Transverse colon (tissue), 4 donors: ENCODE measurements at regions of chr1 and their contacts with region 1.

Region 1: DNA sequence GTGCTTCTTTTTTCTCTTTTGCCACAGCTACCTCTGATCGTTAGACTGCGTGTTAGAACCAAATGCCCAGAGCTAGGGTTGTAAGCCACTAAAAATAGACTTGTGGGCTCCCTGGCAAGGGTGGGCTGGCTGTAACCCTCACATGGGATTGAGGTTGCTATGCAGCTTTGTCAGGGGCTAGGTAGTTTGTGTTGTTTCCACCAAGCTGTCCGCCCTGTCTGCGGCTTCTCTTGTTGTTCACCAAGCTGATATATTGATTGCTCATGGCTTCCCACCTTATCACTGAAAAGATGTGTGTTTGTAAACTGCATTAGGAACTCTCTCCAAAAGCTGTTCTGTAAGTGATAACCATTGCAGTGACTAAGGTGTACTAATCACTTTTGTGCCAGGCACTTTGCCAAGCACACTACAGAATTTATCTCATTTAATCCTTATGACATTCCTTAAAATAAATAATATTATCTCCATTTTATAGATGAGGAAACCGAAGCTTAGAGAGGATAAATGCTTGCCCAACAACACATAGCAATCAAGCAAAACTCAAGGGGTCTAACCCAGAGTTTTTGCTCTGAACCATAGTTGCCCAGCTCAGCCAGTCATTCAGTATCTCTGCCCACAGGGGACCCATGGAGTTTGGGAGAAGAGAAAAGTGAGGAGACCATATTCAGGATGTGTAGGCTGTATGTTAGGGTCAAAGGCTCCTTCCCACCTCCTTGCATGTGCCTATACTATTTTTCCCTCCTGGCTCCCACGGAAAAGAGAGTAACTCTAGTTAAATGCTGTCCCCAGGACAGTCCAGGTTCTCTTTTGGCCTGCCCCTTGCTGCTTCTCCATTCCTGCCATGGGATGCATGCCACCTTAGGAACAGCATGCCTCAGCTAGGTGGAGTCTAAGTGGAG is 42.2 kb upstream of the TARBP1 start:
- DNase-seq: no peak
- H3K4me3 ChIP-seq: no peak overlapping the region
- H3K27ac ChIP-seq: peak overlapping the region in 2 of 4 donors; percentile 82 to 84
- H3K4me1 ChIP-seq: peaks cover 11 to 23% (median 16%) of the 10 kb centered on the region in 4 donors
- H3K27me3 ChIP-seq: no peaks in the 10 kb centered on the region
- CTCF ChIP-seq: no peak
- EP300 ChIP-seq: no peak
- POLR2A ChIP-seq: no peak

Region 2: DNA sequence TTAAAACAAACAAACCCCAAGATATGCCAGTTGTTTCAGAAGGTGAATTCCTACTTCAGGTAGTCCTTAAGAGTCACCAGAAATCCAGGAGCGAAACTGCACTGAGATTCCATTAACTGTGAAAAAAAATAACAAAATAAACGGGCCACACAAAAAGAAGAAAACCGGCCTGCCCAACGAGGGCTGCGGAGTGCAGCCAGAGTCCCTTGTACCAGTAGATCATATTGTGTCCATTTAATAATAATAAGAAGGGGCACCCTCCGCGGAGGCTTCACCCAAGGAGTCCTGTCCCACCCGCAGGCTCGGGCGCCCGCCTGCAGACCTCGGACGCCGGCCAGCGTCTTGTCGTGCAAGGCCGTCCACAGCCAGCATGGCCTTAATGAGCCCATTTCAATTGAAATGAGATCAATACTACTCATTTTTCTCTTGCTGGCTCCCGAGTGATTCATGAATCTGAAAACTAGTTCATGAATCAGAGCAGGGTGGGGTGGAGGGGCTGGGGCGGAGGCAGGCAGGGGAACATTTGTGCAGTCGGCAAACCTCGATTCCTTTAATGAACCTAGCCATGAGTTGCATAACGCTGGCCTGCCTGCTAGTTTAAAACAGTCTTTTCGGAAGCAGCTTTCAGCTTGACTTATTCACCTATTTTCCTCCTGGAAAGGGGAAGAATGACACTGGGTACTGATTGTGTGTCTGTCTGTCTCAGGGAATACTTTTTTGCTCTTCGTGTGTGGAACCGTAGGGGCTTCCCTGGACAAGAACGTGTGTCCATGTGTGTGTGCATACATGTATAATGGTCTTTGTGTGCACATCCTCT is 202.0 kb after region 1 on chr1:
- in situ Hi-C with region 1: no loop called
- intact Hi-C with region 1: loop called (anchors 1 kb)
- DNase-seq: peak; percentile 73
- H3K4me3 ChIP-seq: peak overlapping the region in 1 of 4 donors; percentile 14
- H3K27ac ChIP-seq: peak overlapping the region; percentile 97 to 99 (median 98)
- H3K4me1 ChIP-seq: peaks cover 73 to 93% (median 77%) of the 10 kb centered on the region in 4 donors
- H3K27me3 ChIP-seq: no peaks in the 10 kb centered on the region
- CTCF ChIP-seq: no peak
- EP300 ChIP-seq: no peak
- POLR2A ChIP-seq: no peak